RWPE1 (cell line): ENCODE measurements at regions of chr17 and their contacts with region 1.

Region 1: GRCh38 chr17:74759243-74759801 is 10.9 kb downstream of the NHERF1 start:
- DNase-seq: no peak
- H3K27ac ChIP-seq: peak overlapping the region; percentile 100
- CTCF ChIP-seq: no peak

Region 2: GRCh38 chr17:74748529-74749365 is 10.6 kb before region 1 on chr17 and contains the start of gene NHERF1:
- CTCF ChIA-PET with region 1: interaction called, 36 read pairs
- POLR2A ChIA-PET with region 1: interaction called, 8 read pairs
- DNase-seq: peak; percentile 96
- H3K27ac ChIP-seq: peak within 1 kb of the TSS; percentile 81
- CTCF ChIP-seq: 0 out of 2 replicates have a peak, but pooled peaks have one; percentile 0

Region 3: GRCh38 chr17:74770498-74771318 is 11.4 kb after region 1 on chr17:
- CTCF ChIA-PET with region 1: interaction called, 41 read pairs
- POLR2A ChIA-PET with region 1: interaction called, 17 read pairs
- DNase-seq: peak; percentile 69
- H3K27ac ChIP-seq: peak overlapping the region; percentile 79
- CTCF ChIP-seq: peak; percentile 95

Region 4: DNA sequence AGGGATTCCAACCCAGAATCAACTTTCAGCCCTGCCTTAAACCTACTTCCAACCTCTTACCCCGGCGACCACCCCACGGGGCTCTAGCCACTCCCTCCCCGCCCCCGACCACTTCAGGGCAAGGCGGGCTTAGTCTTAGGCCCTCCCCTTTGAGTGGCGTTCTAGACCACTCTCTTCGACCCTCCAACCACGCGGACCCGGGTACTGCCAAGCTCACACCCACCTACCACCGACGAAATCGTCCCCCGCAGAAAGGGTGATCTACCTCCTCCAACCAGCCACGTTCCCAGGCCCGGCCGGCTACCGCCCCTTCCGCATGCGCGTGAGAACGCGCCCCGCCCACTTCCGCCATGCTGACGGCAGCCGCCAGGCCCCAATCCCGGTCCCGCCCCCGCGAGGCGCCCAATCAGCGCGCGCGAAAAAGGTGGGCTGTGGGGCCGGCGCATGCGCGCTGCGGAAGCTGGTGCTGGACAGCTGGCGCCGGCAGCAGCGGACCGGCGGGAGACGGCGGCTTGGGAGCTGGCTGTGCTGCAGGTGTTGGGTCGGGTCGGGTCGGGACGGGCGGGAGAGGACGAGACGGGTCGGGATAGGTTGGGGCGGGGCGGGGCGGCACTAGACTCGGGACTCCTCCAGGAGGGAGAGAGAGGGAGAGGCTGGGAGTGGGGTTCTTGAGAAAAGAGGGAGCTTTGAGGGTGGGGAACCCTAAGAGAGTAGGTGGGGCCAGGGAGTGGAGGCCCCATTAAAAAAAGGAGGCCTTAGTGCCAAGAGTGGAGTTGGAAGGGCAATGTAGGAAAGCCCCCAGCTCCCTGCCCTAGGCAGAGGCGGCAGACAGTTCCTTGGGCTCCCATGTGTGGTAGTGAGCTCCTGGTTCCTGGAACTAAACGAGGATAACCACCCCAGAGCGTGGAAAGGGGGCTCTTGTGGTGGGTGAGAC is 17.0 kb after region 1 on chr17 and contains the start of gene NAT9:
- CTCF ChIA-PET with region 1: interaction called, 41 read pairs
- POLR2A ChIA-PET with region 1: interaction called, 17 read pairs
- DNase-seq: peak; percentile 100
- H3K27ac ChIP-seq: peak within 1 kb of the TSS; percentile 66
- CTCF ChIP-seq: no peak

Region 5: GRCh38 chr17:74798239-74798707 is 39.0 kb after region 1 on chr17:
- CTCF ChIA-PET with region 1: no interaction called
- POLR2A ChIA-PET with region 1: no interaction called
- DNase-seq: no peak
- H3K27ac ChIP-seq: no peak overlapping the region
- CTCF ChIP-seq: no peak